Left cardiac atrium (tissue), 4 donors: ENCODE measurements at regions of chr14 and their contacts with region 1.

Region 1: GRCh38 chr14:72516936-72517700 is 376.8 kb downstream of the DPF3 start:
- DNase-seq: peak; percentile 52
- ATAC-seq: peak; percentile 77 to 78

Region 2: DNA sequence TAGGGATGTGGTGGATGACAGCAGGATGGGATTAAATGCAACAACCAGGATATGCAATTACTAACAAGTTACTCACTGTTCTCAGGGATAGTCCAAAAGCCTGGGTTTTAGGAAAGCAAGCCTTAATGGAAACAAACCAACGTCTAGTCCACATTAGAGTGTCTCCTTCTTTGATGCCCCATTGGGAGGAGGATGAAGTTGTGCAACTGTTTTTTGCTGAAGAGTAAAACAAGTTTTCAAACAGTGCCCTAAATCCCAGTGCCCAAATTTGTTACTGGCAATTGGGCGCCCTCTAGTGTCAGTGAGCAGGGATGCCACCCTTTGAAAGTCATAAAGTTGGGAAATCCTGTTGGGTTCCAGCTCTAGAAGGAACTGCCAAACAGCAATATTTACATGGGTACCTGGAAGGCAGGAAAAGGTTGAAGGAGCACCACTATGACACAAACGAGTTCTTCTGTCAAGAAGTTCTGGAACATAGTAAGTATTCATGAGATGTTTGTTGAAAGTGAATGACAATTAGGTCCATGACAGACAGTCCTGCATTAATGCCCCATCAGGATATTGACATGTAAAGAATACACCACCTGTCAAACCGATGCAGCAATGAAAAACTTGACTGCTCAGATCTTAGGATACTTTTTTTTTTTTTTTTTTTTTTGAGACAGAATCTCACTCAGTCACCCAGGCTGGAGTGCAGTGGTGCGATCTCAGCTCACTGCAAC is 387.9 kb after region 1 on chr14:
- intact Hi-C with region 1: loop called (anchors 2 kb)
- DNase-seq: peak; percentile 49
- ATAC-seq: peak; percentile 54 to 70

Region 3: GRCh38 chr14:72948481-72949138 is 431.5 kb after region 1 on chr14:
- intact Hi-C with region 1: loop called (anchors 2 to 5 kb)
- DNase-seq: peak; percentile 66
- ATAC-seq: peak; percentile 46 to 48

Region 4: GRCh38 chr14:73272393-73272792 is 755.3 kb after region 1 on chr14:
- intact Hi-C with region 1: no loop called
- DNase-seq: no peak
- ATAC-seq: no peak